ENCODE measurements at regions of chr7 and their contacts with region 1.

Region 1: GRCh38 chr7:83835424-83835823 is 186.5 kb upstream of the SEMA3E start:
- DNase-seq: no peak
- H3K4me3 ChIP-seq: no peak overlapping the region
- H3K27ac ChIP-seq: no peak overlapping the region
- H3K4me1 ChIP-seq: no peaks in the 10 kb centered on the region
- H3K27me3 ChIP-seq: no peaks in the 10 kb centered on the region
- CTCF ChIP-seq: no peak

Region 2: GRCh38 chr7:83085299-83085698 is 750.1 kb before region 1 on chr7:
- intact Hi-C with region 1: loop called (anchors 10 kb)
- DNase-seq: no peak
- H3K4me3 ChIP-seq: no peak overlapping the region
- H3K27ac ChIP-seq: no peak overlapping the region
- H3K4me1 ChIP-seq: no peaks in the 10 kb centered on the region
- H3K27me3 ChIP-seq: no peaks in the 10 kb centered on the region
- CTCF ChIP-seq: no peak

Region 3: DNA sequence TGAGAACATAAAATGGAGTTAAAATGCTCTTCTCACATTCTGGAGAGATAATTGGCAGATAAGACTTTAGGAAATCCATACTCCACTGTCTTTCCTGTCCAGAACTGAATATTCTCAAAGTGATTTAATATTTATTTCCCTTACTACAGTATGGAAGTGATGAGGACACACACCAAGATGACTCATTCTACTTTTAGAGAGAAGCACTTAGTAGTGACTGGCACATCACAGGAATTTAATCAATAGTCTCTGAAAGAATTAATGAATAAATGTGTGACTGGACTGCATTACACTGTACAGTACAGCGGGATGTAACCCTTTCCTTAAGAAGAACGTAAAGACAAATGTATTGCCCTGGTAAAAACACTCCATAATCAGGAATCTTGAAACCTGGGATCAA is 303.2 kb before region 1 on chr7:
- intact Hi-C with region 1: no loop called
- DNase-seq: no peak
- H3K4me3 ChIP-seq: no peak overlapping the region
- H3K27ac ChIP-seq: no peak overlapping the region
- H3K4me1 ChIP-seq: no peaks in the 10 kb centered on the region
- H3K27me3 ChIP-seq: no peaks in the 10 kb centered on the region
- CTCF ChIP-seq: no peak

Region 4: DNA sequence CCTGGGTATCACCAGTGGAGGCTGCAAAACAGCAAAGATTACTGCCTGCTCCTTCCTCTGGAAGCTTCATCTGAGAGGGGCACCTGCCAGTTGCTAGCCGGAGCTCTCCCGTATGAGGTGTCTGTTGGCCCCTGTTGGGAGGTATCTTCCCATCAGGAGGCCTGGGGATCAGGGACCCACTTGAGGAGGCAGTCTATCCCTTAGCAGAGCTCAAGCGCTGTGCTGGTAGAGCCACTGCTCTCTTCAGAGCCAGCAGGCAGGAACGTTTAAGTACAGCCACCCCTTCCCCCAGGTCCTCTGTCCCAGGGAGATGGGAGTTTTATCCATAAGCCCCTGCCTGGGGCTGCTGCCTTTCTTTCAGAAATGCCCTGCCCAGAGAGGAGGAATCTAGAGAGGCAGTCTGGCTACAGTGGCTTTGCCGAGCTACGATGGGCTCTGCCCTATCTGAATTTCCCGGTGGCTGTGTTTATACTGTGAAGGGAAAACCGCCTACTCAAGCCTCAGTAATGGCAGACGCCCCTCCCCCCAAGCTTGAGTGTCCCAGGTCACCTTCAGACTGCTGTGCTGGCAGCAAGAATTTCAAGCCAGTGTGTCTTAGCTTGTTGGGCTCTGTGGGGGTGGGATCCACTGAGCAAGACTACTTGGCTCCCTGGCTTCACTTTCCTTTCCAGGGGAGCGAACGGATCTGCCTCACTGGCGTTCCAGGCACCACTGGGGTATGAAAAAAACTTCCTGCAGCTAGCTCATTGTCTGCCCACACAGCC is 206.1 kb before region 1 on chr7:
- intact Hi-C with region 1: no loop called
- DNase-seq: no peak
- H3K4me3 ChIP-seq: no peak overlapping the region
- H3K27ac ChIP-seq: no peak overlapping the region
- H3K4me1 ChIP-seq: no peaks in the 10 kb centered on the region
- H3K27me3 ChIP-seq: no peaks in the 10 kb centered on the region
- CTCF ChIP-seq: no peak

Region 5: GRCh38 chr7:83798489-83798888 is 36.9 kb before region 1 on chr7:
- intact Hi-C with region 1: no loop called
- DNase-seq: no peak
- H3K4me3 ChIP-seq: no peak overlapping the region
- H3K27ac ChIP-seq: no peak overlapping the region
- H3K4me1 ChIP-seq: no peaks in the 10 kb centered on the region
- H3K27me3 ChIP-seq: no peaks in the 10 kb centered on the region
- CTCF ChIP-seq: no peak

Region 6: GRCh38 chr7:84237533-84238173 is 402.2 kb after region 1 on chr7:
- intact Hi-C with region 1: no loop called
- DNase-seq: no peak
- H3K4me3 ChIP-seq: no peak overlapping the region
- H3K27ac ChIP-seq: no peak overlapping the region
- H3K4me1 ChIP-seq: peaks cover 0 to under 1% (median 0%) of the 10 kb centered on the region in 4 donors
- H3K27me3 ChIP-seq: no peaks in the 10 kb centered on the region
- CTCF ChIP-seq: no peak

Measured in tibial artery (tissue), 4 donors.